ENCODE measurements at regions of chr18 and their contacts with region 1.

Region 1: GRCh38 chr18:12038639-12039417 is 54.8 kb upstream of the ANKRD62 start:
- DNase-seq: peak; percentile 72 to 84 (median 80)
- ATAC-seq: peak; percentile 96
- H3K4me3 ChIP-seq: peak overlapping the region; percentile 31; the same call in 1 of the 2 replicates
- H3K27ac ChIP-seq: no peak overlapping the region
- H3K4me1 ChIP-seq: peaks cover 0 to 13% of the 10 kb centered on the region in 2 experiments; a peak in 2 of 5 replicates
- H3K27me3 ChIP-seq: peaks cover 4 to 38% of the 10 kb centered on the region in 2 experiments; a peak in 4 of 5 replicates
- CTCF ChIP-seq: peak; percentile 89 to 93 (median 90)
- EP300 ChIP-seq: no peak
- POLR2A ChIP-seq: no peak
- RAD21 ChIP-seq: peak; percentile 92 to 96

Region 2: DNA sequence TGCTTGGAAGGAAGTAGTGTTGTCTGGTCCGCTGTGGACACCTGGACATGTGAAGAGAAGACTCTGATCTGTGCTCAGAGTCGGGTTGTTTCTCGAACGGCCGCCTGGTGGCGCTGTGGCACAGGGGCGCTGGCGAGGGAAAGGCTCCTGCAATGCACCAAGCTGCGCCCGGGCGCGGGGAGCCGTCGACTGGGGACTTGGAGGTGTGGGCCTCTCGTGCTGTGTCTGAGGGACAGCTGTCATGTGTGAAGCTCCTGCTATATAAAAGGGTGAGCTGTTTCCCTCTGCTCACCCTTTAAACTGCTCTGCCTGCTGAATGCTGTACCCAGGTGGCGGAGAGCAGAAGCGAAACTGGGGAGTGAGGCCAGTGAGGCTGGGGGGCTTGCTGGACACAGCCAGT is 305.8 kb before region 1 on chr18:
- CTCF ChIA-PET with region 1: interaction called, 4 read pairs
- POLR2A ChIA-PET with region 1: interaction called, 4 read pairs
- in situ Hi-C with region 1: loop called (anchors 5 kb)
- intact Hi-C with region 1: loop called (anchors 10 kb)
- DNase-seq: peak; percentile 78 to 81 (median 78)
- ATAC-seq: peak; percentile 99
- H3K4me3 ChIP-seq: no peak overlapping the region
- H3K27ac ChIP-seq: no peak overlapping the region
- H3K4me1 ChIP-seq: peaks cover 0 to 4% of the 10 kb centered on the region in 2 experiments; a peak in 1 of 5 replicates
- H3K27me3 ChIP-seq: peaks cover 12 to 47% of the 10 kb centered on the region in 2 experiments
- CTCF ChIP-seq: peak; percentile 86 to 93 (median 92)
- EP300 ChIP-seq: no peak
- POLR2A ChIP-seq: no peak
- RAD21 ChIP-seq: peak; percentile 71 to 93

Region 3: GRCh38 chr18:11872479-11873136 is 166.2 kb before region 1 on chr18:
- CTCF ChIA-PET with region 1: no interaction called
- POLR2A ChIA-PET with region 1: no interaction called
- in situ Hi-C with region 1: no loop called
- intact Hi-C with region 1: loop called (anchors 1 kb)
- DNase-seq: peak; percentile 62 to 72 (median 68)
- ATAC-seq: peak; percentile 98
- H3K4me3 ChIP-seq: no peak overlapping the region
- H3K27ac ChIP-seq: no peak overlapping the region
- H3K4me1 ChIP-seq: peaks cover 0 to 3% of the 10 kb centered on the region in 2 experiments; a peak in 1 of 5 replicates
- H3K27me3 ChIP-seq: peaks cover 0 to 17% of the 10 kb centered on the region in 2 experiments; a peak in 4 of 5 replicates
- CTCF ChIP-seq: peak; percentile 72 to 84 (median 79)
- EP300 ChIP-seq: no peak
- POLR2A ChIP-seq: no peak
- RAD21 ChIP-seq: peak; percentile 79 to 95

Region 4: DNA sequence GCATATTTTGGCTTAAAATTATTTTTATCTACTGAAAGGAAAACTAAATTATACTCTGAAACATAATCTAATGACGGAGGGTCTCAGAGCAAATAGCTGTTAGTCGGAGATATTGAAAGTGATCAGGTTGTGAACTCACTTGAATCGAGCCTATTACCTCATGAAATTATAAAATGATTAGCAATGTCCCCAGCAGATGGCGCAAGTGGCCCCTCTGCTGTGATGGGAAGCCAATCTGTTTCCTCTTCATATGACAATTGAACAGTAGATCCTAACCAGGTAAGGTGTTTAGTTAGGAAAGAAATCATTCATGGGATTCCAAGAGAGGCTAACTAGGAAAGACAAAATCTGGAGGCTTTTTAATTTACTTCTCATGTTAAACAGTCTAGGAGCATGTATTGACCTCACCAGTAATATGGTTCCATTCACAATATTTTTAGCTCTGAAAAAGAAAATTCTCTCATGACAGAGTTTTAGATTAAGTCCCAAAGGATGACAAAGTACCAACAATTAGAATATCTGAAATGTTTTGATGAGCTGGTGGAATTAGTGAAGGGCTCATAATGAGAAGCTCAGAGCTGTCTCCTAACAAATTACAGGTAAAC is 100.9 kb before region 1 on chr18:
- CTCF ChIA-PET with region 1: interaction called, 28 read pairs
- POLR2A ChIA-PET with region 1: no interaction called
- in situ Hi-C with region 1: no loop called
- intact Hi-C with region 1: no loop called
- DNase-seq: peak; percentile 61 to 82 (median 64)
- ATAC-seq: peak; percentile 83
- H3K4me3 ChIP-seq: no peak overlapping the region
- H3K27ac ChIP-seq: no peak overlapping the region
- H3K4me1 ChIP-seq: no peaks in the 10 kb centered on the region
- H3K27me3 ChIP-seq: peaks cover 0 to 6% of the 10 kb centered on the region in 2 experiments; a peak in 2 of 5 replicates
- CTCF ChIP-seq: peak; percentile 77 to 89 (median 80)
- EP300 ChIP-seq: no peak
- POLR2A ChIP-seq: no peak
- RAD21 ChIP-seq: peak; percentile 81 to 96

Region 5: GRCh38 chr18:12023375-12023774 is 15.5 kb before region 1 on chr18:
- CTCF ChIA-PET with region 1: no interaction called
- POLR2A ChIA-PET with region 1: no interaction called
- in situ Hi-C with region 1: no loop called
- intact Hi-C with region 1: no loop called
- DNase-seq: no peak
- ATAC-seq: no peak
- H3K4me3 ChIP-seq: no peak overlapping the region
- H3K27ac ChIP-seq: no peak overlapping the region
- H3K4me1 ChIP-seq: no peaks in the 10 kb centered on the region
- H3K27me3 ChIP-seq: peaks cover 4 to 13% of the 10 kb centered on the region in 2 experiments; a peak in 4 of 5 replicates
- CTCF ChIP-seq: no peak
- EP300 ChIP-seq: no peak
- POLR2A ChIP-seq: no peak
- RAD21 ChIP-seq: no peak